Keratinocyte (primary cell): ENCODE measurements at regions of chr15 and their contacts with region 1.

Region 1: DNA sequence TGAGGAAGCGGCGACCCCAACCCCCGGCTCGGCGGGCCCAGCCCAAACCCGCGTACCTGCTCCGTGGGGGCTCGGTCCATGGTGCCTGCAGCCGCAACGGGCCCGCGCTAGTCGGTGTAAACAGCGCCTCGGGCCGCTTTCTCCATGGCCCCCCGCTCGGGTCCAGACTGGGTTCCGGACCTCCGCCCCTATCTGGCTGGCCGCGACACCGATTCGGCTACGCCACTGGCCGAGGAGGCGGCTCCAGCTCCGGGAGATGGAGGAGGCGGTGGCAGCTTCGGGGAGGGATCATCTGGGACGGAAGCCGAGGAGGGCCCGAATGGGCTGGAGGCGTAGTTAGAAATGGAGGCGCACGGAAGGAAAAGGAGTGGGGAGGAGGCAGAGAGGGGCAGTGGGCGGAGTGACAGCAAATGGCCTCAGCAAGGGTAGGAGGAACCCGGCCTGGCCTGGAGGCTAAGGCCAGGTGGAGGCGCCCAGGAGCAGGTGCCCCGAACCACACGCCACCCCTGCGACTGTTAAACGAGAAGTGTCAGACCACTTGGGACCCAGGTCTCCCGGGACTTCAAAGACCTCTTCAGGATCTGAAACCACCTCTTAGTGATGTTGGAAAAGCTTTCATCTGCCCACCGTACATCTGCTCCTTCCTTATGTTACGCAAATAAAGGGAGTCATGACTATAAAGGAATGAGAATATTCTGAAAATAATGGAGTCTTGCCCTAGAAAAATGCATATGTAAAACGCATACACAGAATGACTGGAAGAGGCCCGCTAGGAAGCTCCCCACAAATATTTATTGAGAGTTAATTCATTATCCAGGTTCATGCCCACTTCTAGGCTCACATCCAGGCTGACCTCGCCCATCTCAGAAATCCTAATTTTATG is at the start of gene SECISBP2L:
- DNase-seq: peak; percentile 33
- H3K4me3 ChIP-seq: peak within 1 kb of the TSS; percentile 94 to 99 (median 95)
- H3K27ac ChIP-seq: peak within 1 kb of the TSS; percentile 79
- H3K4me1 ChIP-seq: peaks cover 9% of the 10 kb centered on the region
- H3K27me3 ChIP-seq: no peaks in the 10 kb centered on the region
- CTCF ChIP-seq: peak in 2 of 3 experiments; percentile 19 to 58
- polyA plus RNA-seq, gene SECISBP2L: 8.5 to 15.4 TPM (median 14.8 TPM) in 3 replicates

Region 2: GRCh38 chr15:48914717-48915116 is 131.7 kb before region 1 on chr15:
- dilution Hi-C with region 1: no loop called
- DNase-seq: no peak
- H3K4me3 ChIP-seq: no peak overlapping the region
- H3K27ac ChIP-seq: no peak overlapping the region
- H3K4me1 ChIP-seq: peaks cover 3% of the 10 kb centered on the region
- H3K27me3 ChIP-seq: peaks cover 4% of the 10 kb centered on the region
- CTCF ChIP-seq: no peak

Region 3: DNA sequence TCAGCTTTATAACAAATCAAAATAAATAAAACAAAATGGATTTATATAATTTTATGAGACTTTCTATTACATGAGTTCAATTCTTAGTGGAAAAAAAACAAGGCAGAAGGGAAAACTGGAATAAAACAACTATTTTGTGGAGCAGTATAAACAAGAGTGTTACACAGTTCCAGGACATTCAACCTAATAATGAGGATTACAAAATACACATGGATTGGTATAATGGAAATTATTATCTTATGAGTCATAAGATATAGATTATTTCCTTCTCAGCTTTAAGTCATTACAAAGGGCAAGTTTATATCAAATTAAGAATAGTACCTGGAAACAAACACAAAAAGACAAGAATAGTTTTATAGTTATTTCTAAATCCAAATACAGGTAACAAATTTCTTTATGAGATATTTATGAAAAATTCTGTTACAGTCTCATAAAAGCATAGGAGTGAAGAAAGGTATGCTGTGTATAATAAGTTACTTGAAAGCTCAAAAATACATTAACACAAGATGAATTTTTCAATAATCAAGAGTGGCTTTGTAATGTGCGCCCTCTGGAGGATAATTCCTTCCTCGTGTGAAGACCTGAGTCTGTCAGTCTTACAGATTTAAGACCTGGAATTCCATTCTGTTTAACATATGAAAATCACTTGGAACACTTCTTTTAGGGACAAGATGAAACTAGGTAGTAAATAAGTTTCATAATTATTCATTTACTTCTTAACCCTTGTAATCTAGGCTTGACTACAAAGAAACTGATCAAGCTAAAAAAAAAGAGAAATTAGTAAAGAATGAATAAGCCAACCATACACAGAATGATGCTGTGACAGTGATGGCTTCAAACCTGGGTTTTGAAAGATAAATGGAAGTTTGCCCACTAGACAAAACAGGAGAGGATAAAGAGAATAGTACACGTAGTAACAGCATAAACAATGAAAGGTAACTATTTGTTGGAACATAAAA is 99.5 kb after region 1 on chr15:
- dilution Hi-C with region 1: loop called (anchors 25 kb)
- DNase-seq: no peak
- H3K4me3 ChIP-seq: no peak overlapping the region
- H3K27ac ChIP-seq: peak overlapping the region; percentile 11
- H3K4me1 ChIP-seq: peaks cover 12% of the 10 kb centered on the region
- H3K27me3 ChIP-seq: no peaks in the 10 kb centered on the region
- CTCF ChIP-seq: peak in 2 of 3 experiments; percentile 63 to 66